Tibial artery (tissue), 4 donors: ENCODE measurements at regions of chr14 and their contacts with region 1.

Region 1: GRCh38 chr14:67571272-67571850 is 28.7 kb downstream of the PIGH start:
- DNase-seq: peak; percentile 70 to 71
- H3K4me3 ChIP-seq: no peak overlapping the region
- H3K27ac ChIP-seq: no peak overlapping the region
- H3K4me1 ChIP-seq: no peaks in the 10 kb centered on the region
- H3K27me3 ChIP-seq: peaks cover 0 to 3% of the 10 kb centered on the region in 2 donors
- CTCF ChIP-seq: peak; percentile 67 to 83

Region 2: GRCh38 chr14:67426983-67427606 is 144.3 kb before region 1 on chr14:
- intact Hi-C with region 1: loop called (anchors 5 kb)
- DNase-seq: peak; percentile 59 to 77
- H3K4me3 ChIP-seq: no peak overlapping the region
- H3K27ac ChIP-seq: no peak overlapping the region
- H3K4me1 ChIP-seq: peaks cover 0 to 5% (median 0%) of the 10 kb centered on the region in 4 donors
- H3K27me3 ChIP-seq: peaks cover 0 to 34% of the 10 kb centered on the region in 2 donors
- CTCF ChIP-seq: peak; percentile 77 to 78

Region 3: GRCh38 chr14:67599698-67600561 is 28.6 kb after region 1 on chr14 and contains the start of gene PIGH:
- intact Hi-C with region 1: no loop called
- DNase-seq: peak; percentile 83 to 92
- H3K4me3 ChIP-seq: peak within 1 kb of the TSS; percentile 86 to 92
- H3K27ac ChIP-seq: peak within 1 kb of the TSS; percentile 87 to 93
- H3K4me1 ChIP-seq: peaks cover 0 to 19% (median 3%) of the 10 kb centered on the region in 4 donors
- H3K27me3 ChIP-seq: no peaks in the 10 kb centered on the region
- CTCF ChIP-seq: peak; percentile 50 to 56